ENCODE measurements at regions of chr20 and their contacts with region 1.

Region 1: DNA sequence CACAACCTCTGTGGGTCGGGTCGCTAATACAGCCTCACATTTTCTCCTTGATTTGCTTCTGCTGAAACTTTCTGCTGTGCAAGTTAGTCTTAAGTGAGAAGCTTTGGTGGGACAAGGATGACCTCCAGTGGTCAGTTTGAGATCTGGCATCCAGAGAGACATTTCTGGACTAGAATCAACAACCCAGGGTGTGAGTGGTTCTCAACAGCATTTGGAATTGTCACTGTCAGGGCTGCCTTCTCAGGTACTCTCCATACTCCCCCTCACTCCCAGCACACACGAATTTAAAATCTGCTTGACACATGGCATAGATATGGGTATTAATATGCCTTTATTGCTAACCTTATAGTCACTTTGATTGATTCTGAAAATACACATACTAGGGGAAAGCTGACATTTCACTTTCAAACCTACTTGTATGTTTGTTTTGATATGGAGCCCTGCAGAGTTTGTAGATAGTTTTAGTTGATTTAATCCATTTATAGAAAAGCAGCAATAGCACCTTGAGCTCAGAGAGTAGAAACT is 13.2 kb downstream of the OTOR start:
- DNase-seq: peak; percentile 61
- ATAC-seq: peak; percentile 72
- H3K4me3 Mint-ChIP-seq: no peak overlapping the region
- H3K27ac Mint-ChIP-seq: no peak overlapping the region
- H3K4me1 Mint-ChIP-seq: no peaks in the 10 kb centered on the region
- H3K27me3 Mint-ChIP-seq: peaks cover 8% of the 10 kb centered on the region

Region 2: GRCh38 chr20:15708984-15709598 is 1052.3 kb before region 1 on chr20:
- CTCF ChIA-PET with region 1: no interaction called
- POLR2A ChIA-PET with region 1: no interaction called
- intact Hi-C with region 1: loop called in 1 of 2 experiments (anchors 1 kb)
- DNase-seq: peak; percentile 74
- ATAC-seq: no peak
- H3K4me3 Mint-ChIP-seq: no peak overlapping the region
- H3K27ac Mint-ChIP-seq: no peak overlapping the region
- H3K4me1 Mint-ChIP-seq: no peaks in the 10 kb centered on the region
- H3K27me3 Mint-ChIP-seq: no peaks in the 10 kb centered on the region

Region 3: DNA sequence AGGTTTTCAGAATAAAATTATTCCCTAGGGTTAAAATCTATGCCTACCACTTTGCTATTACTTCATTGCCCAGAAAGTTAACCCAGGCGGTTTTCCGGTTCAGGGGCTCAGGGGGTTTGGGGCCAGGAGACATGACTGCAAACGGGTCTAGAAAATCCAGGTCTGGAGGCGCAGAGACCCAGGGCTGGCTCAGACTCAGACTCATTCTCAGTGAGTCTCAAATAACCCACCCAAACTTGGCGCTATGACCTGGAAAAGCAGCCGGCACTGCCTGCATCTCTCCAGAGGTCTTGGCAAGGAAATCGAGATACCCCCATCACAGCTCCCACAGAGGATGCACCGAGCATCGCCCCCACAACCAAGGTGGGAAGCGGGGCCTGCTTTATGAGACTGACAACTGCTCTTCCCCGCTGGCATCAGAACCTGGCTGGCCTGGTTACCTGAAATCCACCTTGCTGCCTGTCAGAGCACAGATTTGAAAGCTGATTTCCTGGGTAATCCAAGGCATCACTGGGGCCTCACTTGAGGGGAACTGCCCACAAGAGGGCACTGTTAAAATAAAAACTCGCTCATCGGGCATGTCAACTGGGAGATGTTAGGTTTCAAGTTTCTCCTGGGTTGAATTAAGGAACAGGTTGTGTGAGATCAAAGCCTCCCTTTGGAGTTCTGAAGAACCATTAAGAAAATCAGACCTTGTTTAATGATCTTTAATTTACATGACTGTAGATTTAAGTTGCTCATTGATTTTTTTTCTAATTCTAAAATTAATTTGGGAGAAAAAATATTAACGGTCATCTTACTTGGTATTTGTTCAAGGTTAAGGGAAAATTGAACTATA is 243.2 kb before region 1 on chr20:
- CTCF ChIA-PET with region 1: interaction called, 10 read pairs
- POLR2A ChIA-PET with region 1: no interaction called
- intact Hi-C with region 1: loop called (anchors 1 kb)
- DNase-seq: peak; percentile 48
- ATAC-seq: peak; percentile 58
- H3K4me3 Mint-ChIP-seq: no peak overlapping the region
- H3K27ac Mint-ChIP-seq: no peak overlapping the region
- H3K4me1 Mint-ChIP-seq: no peaks in the 10 kb centered on the region
- H3K27me3 Mint-ChIP-seq: no peaks in the 10 kb centered on the region

Region 4: DNA sequence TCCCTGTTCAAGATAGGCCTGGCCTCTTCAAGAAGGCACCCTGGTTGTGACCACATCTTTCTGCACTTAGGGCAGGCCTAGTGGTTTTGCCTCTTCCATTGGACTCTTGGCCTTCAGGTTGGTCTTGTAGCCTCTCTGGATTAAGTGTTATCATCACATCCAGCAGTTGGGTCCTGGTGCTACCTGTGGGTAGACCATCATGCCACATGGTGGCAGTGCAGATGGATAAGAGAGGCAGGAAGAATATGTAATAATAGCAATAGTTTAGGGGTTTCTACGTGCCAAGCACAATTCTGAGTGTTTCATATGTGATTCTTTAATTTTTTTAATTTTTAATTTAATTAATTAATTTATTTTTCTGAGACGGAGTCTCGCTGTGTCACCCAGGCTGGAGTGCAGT is 60.1 kb before region 1 on chr20:
- CTCF ChIA-PET with region 1: interaction called, 7 read pairs
- POLR2A ChIA-PET with region 1: no interaction called
- intact Hi-C with region 1: loop called (anchors 1 kb)
- DNase-seq: peak; percentile 48
- ATAC-seq: no peak
- H3K4me3 Mint-ChIP-seq: no peak overlapping the region
- H3K27ac Mint-ChIP-seq: no peak overlapping the region
- H3K4me1 Mint-ChIP-seq: no peaks in the 10 kb centered on the region
- H3K27me3 Mint-ChIP-seq: peaks cover 6% of the 10 kb centered on the region